ENCODE measurements at regions of chr9 and their contacts with region 1.

Region 1: DNA sequence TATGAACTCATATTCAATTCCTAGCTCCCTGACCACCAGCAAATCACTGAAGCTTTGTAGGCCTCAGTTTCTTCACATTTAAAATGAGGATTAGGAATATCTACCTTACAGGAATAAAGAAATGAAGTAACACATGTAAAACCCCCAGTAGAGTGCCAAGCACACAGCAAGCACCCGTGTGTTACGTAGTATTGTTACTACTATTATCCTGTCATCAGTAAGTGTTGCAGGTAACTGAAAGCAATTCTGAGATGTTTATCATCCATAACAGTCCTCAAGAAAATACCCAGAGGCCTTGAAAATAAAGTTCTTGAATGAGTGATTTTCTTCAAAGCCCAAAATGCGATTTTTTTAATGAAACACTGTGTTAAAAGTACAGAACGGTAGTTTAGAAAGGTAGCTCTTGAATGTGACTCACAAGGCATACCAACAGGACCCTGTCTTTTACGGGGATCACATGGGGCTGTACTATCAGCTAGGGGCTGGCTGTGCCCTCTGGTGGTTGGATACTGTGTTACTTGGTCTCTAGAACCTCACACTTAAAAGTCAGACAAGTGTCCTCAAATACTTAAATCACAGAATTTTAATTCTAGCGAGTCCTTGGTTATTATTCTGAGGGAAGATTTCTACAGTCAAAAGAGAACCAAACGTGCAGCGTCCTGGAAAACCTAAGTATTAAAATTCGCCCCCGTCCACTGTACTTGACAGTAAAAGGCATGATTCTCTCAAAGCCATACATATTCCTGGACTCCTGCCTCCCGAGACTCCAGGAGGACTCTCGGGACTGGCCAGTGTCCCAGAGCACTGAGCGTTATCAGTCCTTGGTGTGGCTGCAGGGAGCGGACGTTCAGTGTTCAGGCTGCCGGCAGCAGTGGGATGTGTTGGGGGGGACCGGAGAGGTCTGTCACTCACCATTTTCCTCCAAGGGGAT is 725 bp downstream of the NDUFB6 start:
- DNase-seq: peak; percentile 67
- ATAC-seq: peak; percentile 91

Region 2: GRCh38 chr9:32384364-32385151 is 187.7 kb before region 1 on chr9 and contains the start of gene ACO1:
- intact Hi-C with region 1: loop called (anchors 1 kb)
- DNase-seq: peak; percentile 95
- ATAC-seq: peak; percentile 99
- total RNA-seq, gene ACO1: 59.5 TPM

Region 3: GRCh38 chr9:32550562-32551433 is 21.4 kb before region 1 on chr9:
- intact Hi-C with region 1: loop called (anchors 1 kb)
- DNase-seq: peak; percentile 96
- ATAC-seq: peak; percentile 87

Measured in Right ventricle myocardium inferior (tissue), 1 donor.